Mucosa of descending colon (tissue), 3 donors: ENCODE measurements at regions of chr1 and their contacts with region 1.

Region 1: GRCh38 chr1:10694633-10695627 is 101.5 kb downstream of the CASZ1 start:
- DNase-seq: peak; percentile 89 to 93 (median 91)
- ATAC-seq: peak; percentile 76
- H3K4me3 ChIP-seq: no peak overlapping the region
- H3K4me1 ChIP-seq: peaks cover 20% of the 10 kb centered on the region
- CTCF ChIP-seq: no peak

Region 2: GRCh38 chr1:10796019-10796944 is 101.4 kb after region 1 on chr1 and contains the start of gene CASZ1:
- intact Hi-C with region 1: loop called in 1 of 2 experiments (anchors 10 kb)
- DNase-seq: peak; percentile 83 to 90 (median 87)
- ATAC-seq: peak; percentile 70
- H3K4me3 ChIP-seq: peak within 1 kb of the TSS; percentile 54
- H3K4me1 ChIP-seq: peaks cover 17% of the 10 kb centered on the region
- CTCF ChIP-seq: no peak
- total RNA-seq, gene CASZ1: 66.5 to 110 (median 84.5) TPM